ENCODE measurements at regions of chr20 and their contacts with region 1.

Region 1: GRCh38 chr20:407133-407952 is 756 bp upstream of the RBCK1 start:
- DNase-seq: no peak
- ATAC-seq: peak; percentile 77
- H3K4me3 ChIP-seq: peak overlapping the region; percentile 72
- H3K27ac ChIP-seq: peak overlapping the region; percentile 45; the same call in 1 of the 2 replicates
- H3K4me1 ChIP-seq: peaks cover 5% of the 10 kb centered on the region; the same call in 1 of the 2 replicates
- H3K27me3 ChIP-seq: no peaks in the 10 kb centered on the region; a peak in 1 of 4 replicates
- CTCF ChIP-seq: peak; percentile 35 to 51 (median 43); a peak in 5 of 6 replicates
- EP300 ChIP-seq: no peak
- POLR2A ChIP-seq: peak; percentile 79
- RAD21 ChIP-seq: peak; percentile 25

Region 2: GRCh38 chr20:381581-382290 is 25.6 kb before region 1 on chr20:
- CTCF ChIA-PET with region 1: interaction called, 5 read pairs
- POLR2A ChIA-PET with region 1: interaction called, 4 read pairs
- RAD21 ChIA-PET with region 1: interaction called, 5 read pairs
- SMC1A ChIA-PET with region 1: interaction called, 3 read pairs
- in situ Hi-C with region 1: no loop called
- intact Hi-C with region 1: loop called (anchors 2 kb)
- DNase-seq: peak; percentile 48
- ATAC-seq: peak; percentile 85
- H3K4me3 ChIP-seq: peak overlapping the region; percentile 98
- H3K27ac ChIP-seq: 0 out of 2 replicates have a peak overlapping the region, but pooled peaks have one; percentile 22
- H3K4me1 ChIP-seq: peaks cover 10% of the 10 kb centered on the region
- H3K27me3 ChIP-seq: no peaks in the 10 kb centered on the region
- CTCF ChIP-seq: no peak
- EP300 ChIP-seq: no peak
- POLR2A ChIP-seq: peak; percentile 79
- RAD21 ChIP-seq: no peak

Region 3: GRCh38 chr20:431012-431904 is 23.9 kb after region 1 on chr20:
- CTCF ChIA-PET with region 1: interaction called, 11 read pairs
- POLR2A ChIA-PET with region 1: interaction called, 7 read pairs
- RAD21 ChIA-PET with region 1: interaction called, 3 read pairs
- SMC1A ChIA-PET with region 1: interaction called, 3 read pairs
- in situ Hi-C with region 1: no loop called
- intact Hi-C with region 1: no loop called
- DNase-seq: no peak
- ATAC-seq: peak; percentile 65
- H3K4me3 ChIP-seq: no peak overlapping the region
- H3K27ac ChIP-seq: no peak overlapping the region
- H3K4me1 ChIP-seq: peaks cover 24% of the 10 kb centered on the region
- H3K27me3 ChIP-seq: no peaks in the 10 kb centered on the region
- CTCF ChIP-seq: peak; percentile 20 to 63 (median 63); a peak in 5 of 6 replicates
- EP300 ChIP-seq: no peak
- POLR2A ChIP-seq: peak; percentile 18
- RAD21 ChIP-seq: peak; percentile 15; the same call in 1 of the 2 replicates

Region 4: DNA sequence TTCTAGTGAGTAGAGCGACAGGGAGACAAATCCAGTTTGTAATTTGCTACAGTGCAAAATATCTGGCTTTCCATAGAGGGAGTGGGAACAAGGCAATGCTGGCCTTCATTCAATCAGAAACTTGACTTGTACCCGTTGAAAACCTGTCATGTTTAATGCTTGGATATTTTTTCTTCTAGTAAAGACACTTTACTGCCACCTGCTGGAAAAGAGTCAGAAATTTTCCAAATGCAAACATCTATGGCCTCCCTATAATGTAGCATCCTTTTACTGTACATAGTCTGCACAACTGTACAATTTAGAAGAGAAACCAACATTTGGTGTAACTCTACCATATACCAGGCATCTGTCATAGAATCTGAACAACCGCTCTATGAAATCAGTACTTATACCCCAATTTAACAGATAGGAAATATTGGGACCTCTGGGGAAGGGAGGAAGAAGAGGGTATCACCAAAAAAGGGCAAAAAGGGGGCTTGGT is 71.6 kb after region 1 on chr20:
- CTCF ChIA-PET with region 1: interaction called, 16 read pairs
- POLR2A ChIA-PET with region 1: no interaction called
- RAD21 ChIA-PET with region 1: interaction called, 4 read pairs
- SMC1A ChIA-PET with region 1: interaction called, 8 read pairs
- in situ Hi-C with region 1: no loop called
- intact Hi-C with region 1: loop called (anchors 1 kb)
- DNase-seq: no peak
- ATAC-seq: peak; percentile 87
- H3K4me3 ChIP-seq: no peak overlapping the region
- H3K27ac ChIP-seq: no peak overlapping the region
- H3K4me1 ChIP-seq: no peaks in the 10 kb centered on the region
- H3K27me3 ChIP-seq: no peaks in the 10 kb centered on the region
- CTCF ChIP-seq: peak; percentile 47 to 68 (median 57); a peak in 5 of 6 replicates
- EP300 ChIP-seq: no peak
- POLR2A ChIP-seq: no peak
- RAD21 ChIP-seq: peak; percentile 75

Measured in GM12878 (cell line).